Prostate gland (tissue), 2 donors: ENCODE measurements at regions of chr12 and their contacts with region 1.

Region 1: DNA sequence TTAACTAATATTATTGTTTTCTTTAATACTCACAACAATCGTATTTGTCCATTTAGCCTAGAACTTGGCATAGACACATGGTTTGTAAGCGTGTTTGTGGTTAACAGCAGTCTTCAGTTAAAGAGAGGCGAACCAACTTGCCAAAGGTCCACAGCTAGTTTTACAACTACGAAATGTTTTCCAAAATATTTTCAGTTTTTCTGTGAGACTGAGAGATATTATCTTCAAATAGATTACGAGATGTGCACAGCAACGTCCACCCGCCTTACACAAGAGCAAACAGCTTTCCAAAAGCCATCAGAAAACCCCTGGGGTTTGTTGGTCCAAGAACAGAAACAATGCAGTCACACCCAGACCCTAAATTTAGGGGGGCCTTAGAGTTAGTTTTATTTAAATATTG is 58.6 kb upstream of the RASSF3 start:
- DNase-seq: no peak
- H3K4me3 ChIP-seq: no peak overlapping the region
- H3K27ac ChIP-seq: peak overlapping the region in 1 of 2 donors; percentile 4
- H3K4me1 ChIP-seq: peaks cover 6% of the 10 kb centered on the region
- H3K27me3 ChIP-seq: no peaks in the 10 kb centered on the region
- CTCF ChIP-seq: no peak
- POLR2A ChIP-seq: no peak

Region 2: GRCh38 chr12:64445490-64445889 is 106.2 kb before region 1 on chr12:
- intact Hi-C with region 1: no loop called
- DNase-seq: no peak
- H3K4me3 ChIP-seq: no peak overlapping the region
- H3K27ac ChIP-seq: peak overlapping the region in 1 of 2 donors; percentile 30
- H3K4me1 ChIP-seq: peaks cover 4% of the 10 kb centered on the region
- H3K27me3 ChIP-seq: no peaks in the 10 kb centered on the region
- CTCF ChIP-seq: no peak
- POLR2A ChIP-seq: no peak

Region 3: GRCh38 chr12:64696080-64696741 is 144.5 kb after region 1 on chr12:
- intact Hi-C with region 1: loop called (anchors 2 kb)
- DNase-seq: no peak
- H3K4me3 ChIP-seq: no peak overlapping the region
- H3K27ac ChIP-seq: no peak overlapping the region
- H3K4me1 ChIP-seq: no peaks in the 10 kb centered on the region
- H3K27me3 ChIP-seq: no peaks in the 10 kb centered on the region
- CTCF ChIP-seq: peak in 2 of 4 experiments; percentile 44 to 55
- POLR2A ChIP-seq: no peak